ENCODE measurements at regions of chr6 and their contacts with region 1.

Region 1: GRCh38 chr6:16739329-16739801 is 21.9 kb downstream of the ATXN1 start:
- DNase-seq: no peak
- ATAC-seq: peak; percentile 75
- H3K4me3 Mint-ChIP-seq: no peak overlapping the region
- H3K27ac Mint-ChIP-seq: peak overlapping the region; percentile 37
- H3K4me1 Mint-ChIP-seq: peaks cover 37% of the 10 kb centered on the region
- H3K27me3 Mint-ChIP-seq: no peaks in the 10 kb centered on the region
- CTCF ChIP-seq: no peak

Region 2: GRCh38 chr6:16511040-16511660 is 228.2 kb before region 1 on chr6:
- CTCF ChIA-PET with region 1: no interaction called
- POLR2A ChIA-PET with region 1: no interaction called
- DNase-seq: no peak
- ATAC-seq: peak; percentile 61
- H3K4me3 Mint-ChIP-seq: no peak overlapping the region
- H3K27ac Mint-ChIP-seq: no peak overlapping the region
- H3K4me1 Mint-ChIP-seq: peaks cover 33% of the 10 kb centered on the region
- H3K27me3 Mint-ChIP-seq: no peaks in the 10 kb centered on the region
- CTCF ChIP-seq: peak; percentile 27; the same call in 1 of the 2 replicates

Region 3: DNA sequence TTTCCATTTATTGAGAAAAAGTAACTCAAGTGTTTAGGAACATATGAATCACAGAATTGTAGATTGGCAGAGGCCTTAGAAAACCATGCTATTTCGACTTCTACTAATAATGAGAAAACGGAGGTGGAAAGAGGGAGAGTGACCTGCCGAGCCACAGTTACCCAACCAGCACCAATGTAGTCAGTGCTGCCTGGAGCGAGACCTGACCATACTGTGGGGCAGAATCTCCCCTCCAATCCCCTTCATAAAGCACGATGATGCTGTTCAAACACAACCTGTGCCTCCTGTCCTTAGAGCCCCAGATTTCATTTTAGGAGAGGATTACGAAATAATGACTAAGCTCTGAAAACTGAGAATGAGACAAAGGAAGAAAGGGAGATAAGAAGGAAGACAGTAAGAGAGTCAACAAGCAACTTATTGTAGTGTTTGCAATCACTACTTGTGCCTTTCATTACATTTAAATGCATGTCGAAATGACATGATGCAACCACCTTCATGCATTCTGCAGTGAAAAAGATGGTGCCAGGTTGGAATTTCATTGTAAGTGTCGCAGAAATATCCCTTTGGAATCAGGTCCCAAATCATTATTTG is 48.7 kb before region 1 on chr6:
- CTCF ChIA-PET with region 1: no interaction called
- POLR2A ChIA-PET with region 1: no interaction called
- DNase-seq: no peak
- ATAC-seq: no peak
- H3K4me3 Mint-ChIP-seq: no peak overlapping the region
- H3K27ac Mint-ChIP-seq: no peak overlapping the region
- H3K4me1 Mint-ChIP-seq: peaks cover 8% of the 10 kb centered on the region
- H3K27me3 Mint-ChIP-seq: no peaks in the 10 kb centered on the region
- CTCF ChIP-seq: no peak

Region 4: DNA sequence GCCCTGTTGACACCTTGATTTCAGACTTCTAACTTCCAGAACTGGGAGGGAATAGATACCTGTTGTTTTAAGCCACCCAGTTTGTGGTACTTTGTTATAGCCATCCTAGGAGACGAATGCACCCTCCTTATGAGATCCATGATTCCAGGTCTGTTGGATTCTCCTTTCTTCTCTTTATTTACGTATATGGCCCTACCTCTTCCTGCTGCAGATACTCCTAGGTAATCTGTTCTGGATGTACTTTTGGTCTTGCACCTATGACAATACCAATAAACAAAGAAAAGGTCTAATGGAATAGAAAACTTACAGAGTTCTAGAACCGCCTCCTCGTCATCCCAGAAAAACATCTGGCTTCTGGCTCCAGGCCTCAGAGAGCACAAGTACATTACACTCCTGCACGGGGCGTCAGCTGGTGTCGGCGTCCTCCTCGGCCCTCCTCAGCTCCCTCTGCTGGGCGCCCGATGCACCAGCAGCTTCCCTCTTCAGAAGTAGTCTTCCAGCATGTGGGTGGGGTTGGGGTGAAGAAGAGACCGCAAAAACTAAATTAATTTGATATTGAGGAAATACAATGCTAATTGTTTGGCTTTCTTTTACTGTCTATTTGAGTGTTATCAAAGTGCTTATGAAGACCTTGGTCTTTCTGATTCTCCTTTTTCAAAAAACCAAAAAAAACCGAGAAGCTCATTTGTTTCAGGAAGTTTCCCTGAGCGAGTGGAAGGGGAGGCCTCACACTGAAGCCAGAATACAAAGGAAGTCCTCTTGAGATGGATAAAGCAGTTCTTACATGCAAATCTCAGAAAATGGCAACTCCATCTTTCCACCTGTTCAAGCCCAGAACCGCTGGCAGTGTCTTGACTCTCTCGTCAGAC is 31.6 kb after region 1 on chr6:
- CTCF ChIA-PET with region 1: interaction called, 14 read pairs
- POLR2A ChIA-PET with region 1: no interaction called
- DNase-seq: peak; percentile 81
- ATAC-seq: peak; percentile 97
- H3K4me3 Mint-ChIP-seq: no peak overlapping the region
- H3K27ac Mint-ChIP-seq: no peak overlapping the region
- H3K4me1 Mint-ChIP-seq: peaks cover 23% of the 10 kb centered on the region
- H3K27me3 Mint-ChIP-seq: peaks cover 3% of the 10 kb centered on the region
- CTCF ChIP-seq: peak; percentile 85